Posterior vena cava (tissue), 2 donors: ENCODE measurements at regions of chr5 and their contacts with region 1.

Region 1: DNA sequence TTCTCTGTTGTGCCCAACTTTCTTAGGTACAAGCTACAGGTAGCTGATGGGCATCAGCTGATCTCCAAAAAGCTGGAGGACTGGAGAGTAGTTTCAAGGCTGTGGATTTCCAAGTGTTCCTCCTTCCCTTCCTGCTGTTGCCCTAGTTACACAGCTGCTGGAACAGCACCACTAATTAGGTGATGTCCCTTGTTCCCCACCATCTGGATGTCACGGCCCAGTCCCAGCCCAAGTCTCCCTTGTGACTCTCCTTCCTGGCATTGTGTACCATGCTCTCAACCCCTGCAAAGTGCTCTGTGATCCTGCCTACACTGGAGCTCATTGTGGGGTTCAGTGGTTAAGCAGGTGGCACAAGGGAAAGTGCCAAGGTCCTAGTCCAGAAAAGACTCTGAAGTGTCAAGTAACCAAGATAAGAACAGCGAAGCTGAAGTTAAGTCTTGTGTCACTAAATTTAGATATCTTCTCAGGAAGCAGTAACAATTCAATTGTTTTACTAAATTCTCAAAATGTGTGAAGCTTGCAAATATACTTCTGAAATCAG is 604.5 kb downstream of the ISL1 start:
- DNase-seq: peak; percentile 17

Region 2: GRCh38 chr5:51997949-51998348 is 10.2 kb after region 1 on chr5:
- intact Hi-C with region 1: loop called in 1 of 2 experiments (anchors 2 kb)
- DNase-seq: no peak